Aorta (tissue), 5 donors: ENCODE measurements at regions of chr4 and their contacts with region 1.

Region 1: GRCh38 chr4:185597532-185598188 is 62.4 kb upstream of the PDLIM3 start:
- DNase-seq: peak; percentile 84 to 93
- ATAC-seq: peak; percentile 84
- H3K4me3 ChIP-seq: no peak overlapping the region
- H3K27ac ChIP-seq: peak overlapping the region; percentile 25 to 89
- H3K4me1 ChIP-seq: peaks cover 0 to 3% of the 10 kb centered on the region in 2 donors
- H3K27me3 ChIP-seq: no peaks in the 10 kb centered on the region

Region 2: DNA sequence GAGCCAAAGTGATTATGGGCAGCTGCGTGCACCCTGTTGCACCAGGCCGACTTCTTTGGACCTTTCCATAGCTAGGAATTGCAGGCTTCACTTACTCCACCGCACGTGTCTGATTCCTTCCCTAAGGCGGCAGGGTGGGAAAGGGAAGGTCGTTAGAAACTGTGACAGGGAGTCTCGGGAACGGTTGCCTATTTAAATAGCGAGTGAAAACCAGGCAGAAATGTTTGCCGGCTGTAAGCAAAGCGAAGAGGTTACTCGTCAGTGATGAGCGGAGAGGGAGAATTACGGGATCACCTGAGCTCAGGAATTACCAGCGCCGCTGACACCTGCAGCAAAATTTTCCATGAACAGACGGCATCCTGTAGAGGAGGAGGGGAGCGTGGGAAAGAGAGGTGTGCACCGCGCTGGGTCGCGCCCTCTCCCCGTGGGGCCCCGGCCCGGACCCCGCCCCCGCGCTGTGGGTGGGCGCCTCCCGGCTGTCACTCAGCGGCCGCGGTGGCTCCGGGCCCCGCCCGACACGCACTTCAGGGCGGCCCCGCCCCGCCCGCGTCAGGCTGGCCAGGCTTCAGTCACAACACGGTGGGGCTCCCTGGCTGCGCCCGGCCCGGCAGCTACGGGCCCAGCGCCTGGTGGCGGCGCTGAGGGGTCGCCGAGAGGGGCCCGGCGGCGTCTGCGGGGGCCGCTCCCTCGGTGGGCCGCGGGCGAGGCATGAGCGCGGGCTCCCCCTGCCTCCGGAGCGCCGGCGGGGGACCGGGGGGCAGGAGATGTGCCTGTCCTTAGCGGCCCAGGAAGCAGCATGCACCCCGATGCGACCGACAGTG is 388.4 kb before region 1 on chr4 and contains the start of gene SNX25:
- intact Hi-C with region 1: loop called (anchors 5 to 10 kb)
- DNase-seq: peak; percentile 91 to 95
- ATAC-seq: peak; percentile 95
- H3K4me3 ChIP-seq: peak within 1 kb of the TSS; percentile 94 to 96
- H3K27ac ChIP-seq: peak within 1 kb of the TSS; percentile 90 to 96
- H3K4me1 ChIP-seq: peaks cover 2 to 4% of the 10 kb centered on the region in 2 donors
- H3K27me3 ChIP-seq: no peaks in the 10 kb centered on the region
- total RNA-seq, gene SNX25: 36.2 to 44.7 TPM

Region 3: DNA sequence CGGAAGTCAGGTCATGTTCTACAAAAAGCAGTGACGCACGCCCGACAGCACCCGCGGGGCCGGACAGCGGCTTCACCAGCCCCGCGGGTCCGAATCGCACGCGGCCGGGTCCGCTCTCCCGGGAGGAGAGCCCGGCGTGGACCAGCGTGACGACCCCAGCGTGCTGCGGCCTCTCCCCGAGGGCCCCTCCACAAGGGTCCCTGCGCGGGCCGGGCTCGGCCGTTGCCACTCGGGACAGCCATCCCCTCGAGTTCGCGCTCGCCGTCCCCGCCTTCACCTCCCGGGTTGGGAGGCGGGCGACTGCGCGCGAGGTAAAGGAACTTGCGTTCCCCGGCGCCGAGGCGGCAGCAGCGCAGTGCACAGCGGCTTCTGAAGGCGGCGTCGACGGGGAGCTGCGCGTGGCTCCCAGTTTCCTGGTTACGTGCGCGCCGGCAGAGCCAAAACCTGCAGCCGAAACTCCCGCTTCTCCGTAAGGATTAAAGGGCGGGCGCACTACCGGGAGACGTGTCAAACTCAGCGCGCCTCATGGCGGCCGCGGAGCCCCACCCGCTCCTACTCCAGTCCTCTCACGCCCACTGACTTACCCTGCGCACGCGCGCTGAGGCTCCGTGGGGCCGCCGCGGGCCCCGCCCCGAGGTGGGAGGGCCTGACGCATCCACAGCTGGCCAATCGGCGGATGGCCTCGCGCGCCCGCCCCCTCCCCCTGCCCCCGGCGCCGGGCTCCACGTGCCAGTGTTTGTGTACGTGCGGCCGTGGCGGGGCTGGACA is 201.5 kb before region 1 on chr4:
- intact Hi-C with region 1: loop called in 1 of 2 experiments (anchors 5 kb)
- DNase-seq: peak; percentile 98
- ATAC-seq: peak; percentile 98
- H3K4me3 ChIP-seq: peak overlapping the region; percentile 71 to 76
- H3K27ac ChIP-seq: peak overlapping the region; percentile 89 to 98
- H3K4me1 ChIP-seq: no peaks in the 10 kb centered on the region
- H3K27me3 ChIP-seq: no peaks in the 10 kb centered on the region

Region 4: DNA sequence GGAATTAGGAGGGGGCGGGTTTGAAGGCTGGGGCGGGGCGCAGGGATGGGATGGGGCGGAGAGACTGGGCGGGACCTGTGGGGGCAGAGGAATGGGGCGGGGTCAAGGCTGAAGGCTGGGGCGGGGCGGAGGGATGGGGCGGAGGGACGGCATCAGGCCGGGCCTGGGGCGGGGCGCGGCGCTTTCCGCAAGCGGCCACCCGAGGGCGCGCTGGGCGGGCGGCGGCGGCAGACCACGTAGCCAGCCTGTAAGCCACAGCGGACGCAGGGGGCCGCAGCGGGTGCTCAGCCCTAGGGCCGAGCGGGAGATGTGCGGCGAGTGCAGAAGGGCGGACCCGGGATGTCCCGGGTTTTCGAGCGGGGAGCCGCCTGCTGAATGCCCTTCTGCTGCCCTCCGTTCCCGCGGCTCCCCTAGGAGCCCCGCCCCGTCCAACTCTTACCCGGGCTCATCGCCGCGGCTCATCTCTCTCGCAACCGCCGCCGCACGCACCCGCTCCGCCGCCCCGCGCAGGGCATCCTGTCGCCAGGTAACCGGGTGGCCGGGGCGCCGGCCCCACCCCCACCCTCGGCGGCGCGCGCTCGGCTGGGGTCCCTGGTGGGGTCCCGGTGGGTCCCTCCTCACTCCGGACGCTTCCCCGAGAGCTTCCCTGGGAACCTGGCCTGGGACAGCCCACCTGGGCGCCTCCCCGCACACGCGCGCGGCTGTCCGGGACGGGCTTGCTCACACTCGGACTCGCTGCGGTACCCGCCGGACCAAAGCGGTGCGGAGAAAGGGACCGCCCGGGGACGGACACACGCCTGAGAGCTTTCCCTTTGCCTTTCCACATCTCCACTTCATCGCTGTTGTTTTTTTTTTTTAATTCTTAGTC is 126.2 kb before region 1 on chr4 and contains the start of gene CCDC110:
- intact Hi-C with region 1: loop called (anchors 2 to 5 kb)
- DNase-seq: peak; percentile 95 to 98
- ATAC-seq: peak; percentile 98
- H3K4me3 ChIP-seq: peak within 1 kb of the TSS; percentile 73 to 97
- H3K27ac ChIP-seq: peak within 1 kb of the TSS in 1 of 2 donors; percentile 61
- H3K4me1 ChIP-seq: no peaks in the 10 kb centered on the region
- H3K27me3 ChIP-seq: no peaks in the 10 kb centered on the region
- total RNA-seq, gene CCDC110: 3.0 to 3.8 TPM

Region 5: DNA sequence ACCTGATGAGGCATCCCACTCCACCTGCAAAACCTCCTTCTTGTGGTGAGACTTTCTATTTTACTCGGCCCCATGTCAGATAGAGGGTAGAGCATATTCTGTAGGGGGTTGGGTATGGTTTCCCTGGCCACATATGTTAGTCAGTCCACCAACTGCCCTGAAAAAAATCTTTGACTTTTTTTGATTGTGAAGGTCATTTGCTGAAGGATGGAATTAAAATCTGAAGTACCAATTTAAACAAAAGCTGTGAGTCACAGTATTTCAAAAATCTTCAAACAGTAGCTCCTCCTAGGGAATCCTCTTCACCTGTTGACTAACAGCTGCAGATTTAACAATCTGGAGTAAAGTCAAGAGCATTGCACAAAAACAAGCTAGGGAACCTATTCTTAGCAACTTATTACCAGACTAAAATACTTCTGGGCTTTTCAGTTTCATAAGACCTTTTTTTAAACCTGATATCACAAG is 118.1 kb before region 1 on chr4:
- intact Hi-C with region 1: loop called in 1 of 2 experiments (anchors 5 kb)
- DNase-seq: no peak
- ATAC-seq: no peak
- H3K4me3 ChIP-seq: no peak overlapping the region
- H3K27ac ChIP-seq: peak overlapping the region in 1 of 2 donors; percentile 17
- H3K4me1 ChIP-seq: peaks cover 0 to 6% of the 10 kb centered on the region in 2 donors
- H3K27me3 ChIP-seq: no peaks in the 10 kb centered on the region

Region 6: GRCh38 chr4:185833055-185833598 is 235.5 kb after region 1 on chr4:
- intact Hi-C with region 1: no loop called
- DNase-seq: no peak
- ATAC-seq: no peak
- H3K4me3 ChIP-seq: no peak overlapping the region
- H3K27ac ChIP-seq: no peak overlapping the region
- H3K4me1 ChIP-seq: peaks cover 0 to 1% of the 10 kb centered on the region in 2 donors
- H3K27me3 ChIP-seq: no peaks in the 10 kb centered on the region